Calu3 (cell line): ENCODE measurements at regions of chr11 and their contacts with region 1.

Region 1: DNA sequence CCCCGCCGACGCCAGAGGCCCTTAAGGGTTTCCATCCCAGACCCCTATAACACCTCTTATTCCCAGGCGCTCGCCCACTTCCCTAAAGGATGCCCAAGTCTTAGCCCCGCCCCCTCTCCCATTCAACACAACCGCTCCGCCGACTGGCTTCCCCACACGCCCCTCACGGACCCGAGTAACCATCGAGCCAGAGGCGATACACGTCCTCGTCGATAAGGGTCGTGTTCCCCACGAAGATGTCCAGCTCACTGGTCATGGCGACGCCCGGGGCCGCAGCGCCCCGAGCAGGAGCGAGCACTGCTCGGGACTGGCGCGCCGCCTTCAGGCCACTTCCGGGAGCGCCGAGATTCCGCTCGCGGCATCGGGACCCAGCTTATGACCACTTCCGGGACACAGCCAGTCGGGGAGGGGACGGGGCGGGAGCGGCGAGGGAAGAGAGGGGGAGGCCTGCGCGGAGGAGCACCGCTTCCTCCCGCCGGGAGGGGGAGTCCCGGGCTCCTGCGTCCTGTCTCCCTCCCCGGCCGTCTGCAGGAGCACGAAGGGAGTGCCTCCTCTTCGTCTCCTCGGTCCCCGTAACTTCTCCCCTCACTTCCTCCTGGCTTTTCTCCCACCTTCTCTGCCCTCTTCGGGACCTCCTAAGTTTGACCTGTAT is at the start of gene FIBP:
- DNase-seq: peak; percentile 96
- H3K4me3 Mint-ChIP-seq: peak within 1 kb of the TSS; percentile 83
- H3K27ac Mint-ChIP-seq: peak within 1 kb of the TSS; percentile 92
- H3K4me1 Mint-ChIP-seq: peaks cover 48% of the 10 kb centered on the region
- H3K27me3 Mint-ChIP-seq: no peaks in the 10 kb centered on the region
- CTCF ChIP-seq: peak; percentile 90
- total RNA-seq, gene FIBP: 75.8 and 79.2 TPM in 2 replicates

Region 2: GRCh38 chr11:65711785-65712632 is 176.3 kb before region 1 on chr11 and contains the start of gene KAT5:
- CTCF ChIA-PET with region 1: interaction called, 10 read pairs
- intact Hi-C with region 1: no loop called
- DNase-seq: peak; percentile 98
- H3K4me3 Mint-ChIP-seq: peak within 1 kb of the TSS; percentile 86
- H3K27ac Mint-ChIP-seq: peak within 1 kb of the TSS; percentile 99
- H3K4me1 Mint-ChIP-seq: peaks cover 6% of the 10 kb centered on the region
- H3K27me3 Mint-ChIP-seq: no peaks in the 10 kb centered on the region
- CTCF ChIP-seq: peak; percentile 95
- total RNA-seq, gene KAT5: 50.9 and 51.0 TPM in 2 replicates

Region 3: GRCh38 chr11:65859200-65859811 is 29.0 kb before region 1 on chr11:
- CTCF ChIA-PET with region 1: interaction called, 37 read pairs
- intact Hi-C with region 1: no loop called
- DNase-seq: peak; percentile 97
- H3K4me3 Mint-ChIP-seq: peak overlapping the region; percentile 84
- H3K27ac Mint-ChIP-seq: peak overlapping the region; percentile 95
- H3K4me1 Mint-ChIP-seq: peaks cover 37% of the 10 kb centered on the region
- H3K27me3 Mint-ChIP-seq: no peaks in the 10 kb centered on the region
- CTCF ChIP-seq: no peak

Region 4: DNA sequence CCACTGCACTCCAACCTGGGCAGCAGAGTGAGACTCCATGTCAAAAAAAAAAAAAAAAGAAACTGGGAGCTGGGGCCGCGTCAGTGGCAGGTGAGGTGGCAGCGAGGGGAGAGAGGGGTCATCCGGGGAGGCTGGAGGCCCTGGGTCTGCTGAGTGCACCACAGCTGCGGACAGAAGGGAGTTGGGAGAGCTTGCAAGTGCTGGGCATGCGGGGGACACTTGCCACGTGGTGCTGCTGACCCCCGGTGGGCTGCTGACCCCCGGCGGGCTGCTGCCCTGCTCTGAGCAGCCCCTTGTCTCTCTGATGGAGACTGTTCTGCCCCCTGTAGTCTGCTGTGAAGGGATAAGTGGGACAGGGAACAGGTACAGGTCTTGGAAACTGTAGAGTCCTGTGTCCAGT is 33.6 kb after region 1 on chr11:
- CTCF ChIA-PET with region 1: no interaction called
- intact Hi-C with region 1: no loop called
- DNase-seq: no peak
- H3K4me3 Mint-ChIP-seq: no peak overlapping the region
- H3K27ac Mint-ChIP-seq: no peak overlapping the region
- H3K4me1 Mint-ChIP-seq: peaks cover 12% of the 10 kb centered on the region
- H3K27me3 Mint-ChIP-seq: no peaks in the 10 kb centered on the region
- CTCF ChIP-seq: no peak

Region 5: DNA sequence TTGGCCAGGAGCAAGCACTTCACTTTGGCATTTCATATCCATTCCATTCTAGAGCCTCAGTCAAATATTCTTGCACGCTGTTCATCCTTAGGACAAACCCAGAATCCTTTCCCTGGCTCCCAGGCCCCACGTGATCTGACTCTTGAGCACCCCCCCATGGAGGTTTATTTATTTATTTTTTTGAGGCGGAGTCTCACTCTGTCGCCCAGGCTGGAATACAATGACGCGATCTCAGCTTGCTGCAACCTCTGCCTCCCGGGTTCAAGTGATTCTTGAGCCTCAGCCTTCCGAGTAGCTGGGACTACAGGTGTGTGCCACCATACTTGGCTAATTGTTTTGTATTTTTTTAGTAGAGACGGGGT is 44.2 kb after region 1 on chr11:
- CTCF ChIA-PET with region 1: interaction called, 11 read pairs
- intact Hi-C with region 1: no loop called
- DNase-seq: peak; percentile 31
- H3K4me3 Mint-ChIP-seq: no peak overlapping the region
- H3K27ac Mint-ChIP-seq: no peak overlapping the region
- H3K4me1 Mint-ChIP-seq: no peaks in the 10 kb centered on the region
- H3K27me3 Mint-ChIP-seq: peaks cover 8% of the 10 kb centered on the region
- CTCF ChIP-seq: no peak

Region 6: GRCh38 chr11:66001942-66002647 is 113.8 kb after region 1 on chr11 and contains the starts of genes BANF1 and EIF1AD:
- CTCF ChIA-PET with region 1: interaction called, 12 read pairs
- intact Hi-C with region 1: no loop called
- DNase-seq: peak; percentile 93
- H3K4me3 Mint-ChIP-seq: peak within 1 kb of the TSS; percentile 92
- H3K27ac Mint-ChIP-seq: peak within 1 kb of the TSS; percentile 90
- H3K4me1 Mint-ChIP-seq: peaks cover 14% of the 10 kb centered on the region
- H3K27me3 Mint-ChIP-seq: no peaks in the 10 kb centered on the region
- CTCF ChIP-seq: no peak
- total RNA-seq, gene BANF1: 248 and 266 TPM in 2 replicates
- total RNA-seq, gene EIF1AD: 55.1 and 61.1 TPM in 2 replicates

Region 7: DNA sequence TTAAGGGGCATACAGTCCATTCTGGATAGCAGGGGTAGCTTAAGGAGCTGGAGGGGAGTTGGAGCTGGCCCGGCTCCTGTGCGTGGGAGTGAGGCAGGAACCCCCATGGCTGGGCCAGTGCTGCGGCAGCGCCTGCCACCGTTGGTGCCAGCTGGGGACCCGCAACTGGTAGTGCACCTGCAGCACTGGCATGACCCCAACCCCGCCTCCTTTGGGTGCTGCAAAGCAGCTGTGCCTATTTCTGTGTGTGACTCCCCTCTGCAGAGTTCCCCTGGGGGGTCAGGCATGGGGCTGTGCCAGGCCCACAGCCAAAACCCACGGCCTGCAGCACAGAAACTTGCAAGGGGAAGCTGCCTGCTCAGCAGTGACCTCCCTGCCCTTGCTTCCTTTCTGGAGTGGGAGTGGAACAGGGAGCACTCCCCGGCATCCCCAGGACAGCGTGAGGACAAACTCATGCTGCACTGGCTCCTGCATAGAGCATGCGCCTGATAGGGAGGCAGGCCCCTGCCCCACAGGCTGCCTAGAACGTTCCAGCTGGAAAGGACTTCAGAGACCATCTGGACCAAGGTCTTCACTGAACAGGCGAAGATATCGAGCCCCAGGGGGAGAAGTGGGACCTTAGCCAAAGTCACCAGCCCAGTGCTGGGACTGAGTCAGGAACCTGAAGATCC is 353.9 kb after region 1 on chr11:
- CTCF ChIA-PET with region 1: no interaction called
- intact Hi-C with region 1: no loop called
- DNase-seq: no peak
- H3K4me3 Mint-ChIP-seq: no peak overlapping the region
- H3K27ac Mint-ChIP-seq: no peak overlapping the region
- H3K4me1 Mint-ChIP-seq: no peaks in the 10 kb centered on the region
- H3K27me3 Mint-ChIP-seq: no peaks in the 10 kb centered on the region
- CTCF ChIP-seq: no peak